IMR-90 (cell line): ENCODE measurements at regions of chr19 and their contacts with region 1.

Region 1: DNA sequence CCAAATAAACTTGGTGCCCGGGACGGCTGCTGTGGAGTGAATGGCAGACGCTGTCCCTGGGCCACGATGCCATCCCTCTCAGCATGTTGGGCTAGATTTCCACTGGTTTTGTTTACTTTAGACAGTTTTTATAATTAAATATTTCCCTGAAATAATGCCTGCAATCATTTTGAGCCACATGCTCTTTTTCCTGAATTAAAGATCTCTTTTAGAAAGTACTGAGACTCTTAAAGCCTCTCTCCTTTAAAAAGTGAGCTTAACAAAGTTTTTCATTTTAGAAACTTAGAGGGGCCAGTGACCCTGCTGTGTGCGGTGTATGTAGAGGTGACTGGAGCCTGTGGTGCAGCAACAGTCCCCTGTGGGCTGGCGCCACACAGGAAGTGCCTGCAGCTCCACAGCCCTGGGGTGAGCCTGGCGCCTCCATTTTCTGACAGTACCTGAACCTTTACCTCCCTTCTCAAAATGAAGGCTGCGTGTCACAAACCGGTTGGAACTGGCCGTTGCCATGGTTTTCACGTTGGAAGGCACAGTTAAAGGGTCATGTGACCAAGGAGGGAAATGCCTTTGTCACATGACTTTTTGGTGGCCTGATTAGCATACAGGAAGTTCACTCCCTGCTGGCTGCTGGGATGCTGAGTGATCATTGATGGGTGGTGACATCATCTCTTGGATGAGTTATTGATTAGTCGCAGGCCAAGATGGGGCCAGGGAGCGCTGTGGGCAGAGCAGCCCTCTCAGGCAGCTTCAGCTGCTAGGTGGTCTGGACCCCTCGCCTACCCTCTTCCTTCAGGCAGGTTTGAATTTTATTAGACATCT is 26.3 kb downstream of the TSSK6 start:
- DNase-seq: peak; percentile 96
- ATAC-seq: peak; percentile 54
- H3K4me3 ChIP-seq: no peak overlapping the region; the same call in 1 of the 2 replicates
- H3K27ac ChIP-seq: peak overlapping the region; percentile 93
- H3K4me1 ChIP-seq: peaks cover 38% of the 10 kb centered on the region
- H3K27me3 ChIP-seq: no peaks in the 10 kb centered on the region
- CTCF ChIP-seq: no peak
- POLR2A ChIP-seq: peak; percentile 24; the same call in 1 of the 2 replicates
- RAD21 ChIP-seq: no peak

Region 2: GRCh38 chr19:19366612-19367396 is 122.3 kb before region 1 on chr19:
- CTCF ChIA-PET with region 1: interaction called, 4 read pairs
- POLR2A ChIA-PET with region 1: no interaction called
- dilution Hi-C with region 1: no loop called
- in situ Hi-C with region 1: loop called (anchors 5 kb)
- intact Hi-C with region 1: loop called (anchors 1 kb)
- DNase-seq: peak; percentile 64
- ATAC-seq: peak; percentile 91
- H3K4me3 ChIP-seq: no peak overlapping the region
- H3K27ac ChIP-seq: no peak overlapping the region
- H3K4me1 ChIP-seq: peaks cover 2% of the 10 kb centered on the region; the same call in 1 of the 2 replicates
- H3K27me3 ChIP-seq: no peaks in the 10 kb centered on the region
- CTCF ChIP-seq: peak; percentile 79
- POLR2A ChIP-seq: no peak
- RAD21 ChIP-seq: peak; percentile 75

Region 3: DNA sequence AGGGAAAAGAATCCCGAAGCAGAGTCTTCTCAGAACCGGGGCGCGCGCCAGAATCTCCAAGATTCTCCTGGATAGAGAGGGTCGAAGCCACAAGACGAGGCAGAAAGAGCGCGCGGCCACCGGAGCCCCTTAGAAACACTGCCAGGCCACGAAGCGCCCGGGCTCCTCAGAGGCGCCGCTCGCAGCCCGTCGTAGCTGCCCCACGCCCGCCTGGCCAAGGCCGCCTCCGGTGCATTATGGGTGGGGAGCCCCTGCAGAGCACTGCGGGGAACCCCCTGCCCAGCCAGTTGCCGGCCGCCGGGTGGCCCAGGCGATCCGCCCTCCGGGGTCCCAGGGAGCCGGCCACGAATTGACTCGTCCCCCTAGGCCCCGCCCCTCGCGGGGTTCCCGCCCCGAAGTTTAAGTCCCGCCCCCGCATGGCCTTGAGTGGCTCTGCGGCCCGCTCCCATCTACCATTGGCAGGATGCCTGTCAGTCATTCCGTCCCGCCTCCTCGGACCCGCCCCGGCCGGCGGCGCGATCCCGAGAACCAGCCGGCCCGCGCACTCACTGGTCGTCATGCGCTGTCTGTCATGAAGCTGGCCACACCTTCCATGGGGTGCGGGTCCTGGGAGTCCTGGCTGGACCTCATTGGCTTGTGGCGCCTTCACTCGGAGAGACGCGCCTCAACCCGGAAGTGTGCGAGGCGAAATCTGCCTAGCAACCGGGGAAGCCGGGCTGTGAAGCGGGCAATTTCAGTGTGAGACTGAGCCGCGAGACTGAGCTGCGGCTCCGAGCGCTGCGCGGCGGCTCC is 103.8 kb before region 1 on chr19:
- CTCF ChIA-PET with region 1: no interaction called
- POLR2A ChIA-PET with region 1: interaction called, 6 read pairs
- dilution Hi-C with region 1: no loop called
- in situ Hi-C with region 1: no loop called
- intact Hi-C with region 1: loop called (anchors 5 kb)
- DNase-seq: peak; percentile 100
- ATAC-seq: peak; percentile 96
- H3K4me3 ChIP-seq: peak overlapping the region; percentile 71
- H3K27ac ChIP-seq: peak overlapping the region; percentile 55
- H3K4me1 ChIP-seq: peaks cover 8% of the 10 kb centered on the region
- H3K27me3 ChIP-seq: no peaks in the 10 kb centered on the region
- CTCF ChIP-seq: peak; percentile 20; the same call in 1 of the 2 replicates
- POLR2A ChIP-seq: peak; percentile 74
- RAD21 ChIP-seq: no peak

Region 4: DNA sequence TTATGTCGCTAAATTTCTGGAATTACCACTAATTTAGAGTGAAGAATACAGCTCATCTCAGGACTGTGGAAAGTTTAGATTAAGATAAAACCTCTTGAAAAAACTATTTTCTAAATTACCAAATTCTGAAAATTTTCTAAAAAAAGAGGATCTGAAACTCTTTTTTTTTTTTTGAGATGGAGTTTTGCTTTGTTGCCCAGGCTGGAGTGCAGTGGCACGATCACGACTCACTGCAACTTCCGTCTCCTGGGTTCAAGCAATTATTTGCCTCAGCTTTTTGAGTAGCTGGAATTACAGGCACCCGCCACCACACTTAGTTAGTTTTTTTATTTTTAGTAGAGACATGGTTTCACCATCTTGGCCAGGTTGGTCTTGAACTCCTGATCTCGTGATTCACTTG is 360.0 kb after region 1 on chr19:
- CTCF ChIA-PET with region 1: no interaction called
- POLR2A ChIA-PET with region 1: no interaction called
- dilution Hi-C with region 1: no loop called
- in situ Hi-C with region 1: no loop called
- intact Hi-C with region 1: no loop called
- DNase-seq: no peak
- ATAC-seq: no peak
- H3K4me3 ChIP-seq: no peak overlapping the region
- H3K27ac ChIP-seq: no peak overlapping the region
- H3K4me1 ChIP-seq: no peaks in the 10 kb centered on the region
- H3K27me3 ChIP-seq: no peaks in the 10 kb centered on the region
- CTCF ChIP-seq: no peak
- POLR2A ChIP-seq: no peak
- RAD21 ChIP-seq: no peak